ENCODE measurements at regions of chr3 and their contacts with region 1.

Region 1: DNA sequence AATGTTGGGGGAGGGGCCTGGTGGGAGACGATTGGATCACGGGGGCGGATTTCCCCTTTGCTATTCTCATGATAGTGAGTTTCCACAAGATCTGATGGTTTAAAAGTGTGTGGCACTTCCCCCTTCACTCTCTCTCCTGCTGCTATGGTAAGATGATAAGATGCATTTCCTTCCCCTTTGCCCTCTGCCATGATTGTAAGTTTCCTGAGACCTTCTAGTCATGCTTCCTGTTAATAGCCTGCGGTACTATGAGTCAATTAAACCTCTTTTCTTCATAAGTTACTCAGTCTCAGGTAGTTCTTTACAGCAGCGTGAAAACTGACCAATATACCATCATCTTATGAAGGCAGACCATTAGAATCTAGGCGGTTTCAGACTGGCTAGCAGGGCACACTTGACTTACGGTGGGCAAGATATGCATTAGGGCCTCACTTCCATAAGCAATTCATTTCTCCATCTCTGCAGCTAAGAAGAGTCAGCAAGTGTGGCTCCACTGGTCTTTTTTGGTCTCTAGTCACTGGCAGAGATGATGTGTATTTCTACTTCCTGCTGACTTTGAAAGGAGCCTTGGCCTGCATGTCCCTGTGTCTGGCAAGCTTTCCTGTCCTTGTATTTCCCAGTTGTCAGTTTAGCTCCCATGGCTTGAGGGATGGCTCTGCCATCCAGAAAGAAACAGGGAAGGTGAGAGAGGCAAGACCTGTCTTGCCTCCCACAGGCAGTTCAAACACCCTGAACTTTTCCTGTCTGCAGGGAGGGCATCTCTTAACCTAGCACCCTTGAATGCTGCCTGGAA is 109.0 kb upstream of the ADAMTS9 start:
- DNase-seq: no peak

Region 2: GRCh38 chr3:64561325-64561843 is 235.4 kb before region 1 on chr3:
- intact Hi-C with region 1: no loop called
- DNase-seq: no peak

Region 3: DNA sequence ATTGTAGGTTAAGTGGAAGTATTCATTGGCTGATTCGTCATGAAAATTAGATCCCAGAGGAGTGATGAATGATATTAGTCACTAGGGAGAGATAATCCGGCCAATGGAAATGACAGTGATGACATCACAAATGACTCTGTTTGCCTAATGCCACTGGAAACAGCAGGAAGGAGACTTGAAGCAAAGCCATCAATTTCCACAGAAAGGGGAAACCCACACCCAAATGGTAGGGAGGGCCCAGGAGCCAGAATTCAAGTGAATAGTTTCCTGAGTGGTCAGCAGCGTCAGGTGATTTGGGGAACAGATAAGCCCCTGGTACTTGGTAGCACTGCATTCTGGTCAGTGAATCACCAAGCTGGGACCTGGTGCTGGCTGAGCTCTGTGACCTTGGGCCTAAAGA is 105.8 kb before region 1 on chr3:
- intact Hi-C with region 1: no loop called
- DNase-seq: peak; percentile 71

Region 4: GRCh38 chr3:64915778-64916177 is 119.0 kb after region 1 on chr3:
- intact Hi-C with region 1: no loop called
- DNase-seq: no peak

Region 5: DNA sequence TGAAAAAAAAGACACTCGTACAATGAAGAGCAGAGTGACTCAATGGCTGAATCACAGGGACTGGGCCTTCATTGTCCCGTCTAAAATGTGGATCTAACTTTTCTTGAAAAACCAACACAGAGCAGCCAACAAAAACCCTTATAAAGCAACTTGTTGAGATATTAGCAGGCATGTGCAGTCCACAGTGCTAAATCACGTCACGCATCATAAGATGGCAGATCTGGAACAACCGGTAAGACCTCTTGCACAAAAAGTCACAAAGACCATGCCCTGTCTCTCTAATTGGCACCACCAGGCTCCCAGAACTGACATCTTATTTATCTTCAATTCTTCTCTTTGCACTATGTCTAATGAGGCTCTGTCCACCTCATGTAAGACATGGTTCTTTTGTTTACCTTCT is 1064.9 kb after region 1 on chr3:
- intact Hi-C with region 1: loop called in 1 of 2 experiments (anchors 5 kb)
- DNase-seq: no peak

Measured in posterior vena cava (tissue), 2 donors.